ENCODE measurements at regions of chr2 and their contacts with region 1.

Region 1: DNA sequence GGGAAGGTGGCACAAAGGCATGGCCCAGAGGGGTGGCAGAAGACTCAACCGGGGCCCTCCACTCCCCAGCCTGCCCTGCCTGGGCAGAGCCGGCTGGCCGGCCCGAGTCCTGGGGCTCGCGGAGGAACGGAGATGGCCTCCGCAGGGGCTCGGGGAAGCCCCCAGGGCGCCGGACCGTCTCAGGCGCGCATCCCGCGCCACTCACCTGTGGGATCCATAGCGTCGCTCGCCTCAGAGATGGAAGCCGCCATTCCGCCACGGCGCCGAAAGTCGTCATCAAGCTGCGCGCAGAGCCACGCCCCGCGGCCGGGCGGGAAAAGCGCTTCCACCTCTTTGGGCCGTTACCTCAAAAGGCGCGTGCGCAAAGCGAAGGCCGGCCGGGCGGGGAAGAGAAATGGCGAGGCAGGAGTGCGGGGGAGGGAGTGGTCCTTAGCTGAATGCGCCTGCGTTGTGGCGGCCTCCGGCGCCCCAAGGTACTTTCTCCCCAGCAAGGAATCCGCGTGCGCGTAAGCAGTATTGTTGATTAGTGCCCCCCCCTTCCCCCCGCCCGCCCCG is at the start of gene SMPD4:
- DNase-seq: peak; percentile 95
- H3K4me3 ChIP-seq: peak within 1 kb of the TSS; percentile 73 to 99 (median 99)
- H3K27ac ChIP-seq: peak within 1 kb of the TSS; percentile 89
- H3K4me1 ChIP-seq: peaks cover 13% of the 10 kb centered on the region
- H3K27me3 ChIP-seq: no peaks in the 10 kb centered on the region
- CTCF ChIP-seq: no peak
- total RNA-seq, gene SMPD4: 21.8 to 69.3 TPM

Region 2: GRCh38 chr2:128922154-128922553 is 1259.2 kb before region 1 on chr2:
- CTCF ChIA-PET with region 1: interaction called, 16 read pairs
- dilution Hi-C with region 1: no loop called
- in situ Hi-C with region 1: no loop called
- intact Hi-C with region 1: no loop called
- DNase-seq: no peak
- H3K4me3 ChIP-seq: no peak overlapping the region
- H3K27ac ChIP-seq: no peak overlapping the region
- H3K4me1 ChIP-seq: no peaks in the 10 kb centered on the region
- H3K27me3 ChIP-seq: no peaks in the 10 kb centered on the region
- CTCF ChIP-seq: no peak

Measured in mammary epithelial cell (primary cell).